Calu3 (cell line): ENCODE measurements at regions of chr7 and their contacts with region 1.

Region 1: DNA sequence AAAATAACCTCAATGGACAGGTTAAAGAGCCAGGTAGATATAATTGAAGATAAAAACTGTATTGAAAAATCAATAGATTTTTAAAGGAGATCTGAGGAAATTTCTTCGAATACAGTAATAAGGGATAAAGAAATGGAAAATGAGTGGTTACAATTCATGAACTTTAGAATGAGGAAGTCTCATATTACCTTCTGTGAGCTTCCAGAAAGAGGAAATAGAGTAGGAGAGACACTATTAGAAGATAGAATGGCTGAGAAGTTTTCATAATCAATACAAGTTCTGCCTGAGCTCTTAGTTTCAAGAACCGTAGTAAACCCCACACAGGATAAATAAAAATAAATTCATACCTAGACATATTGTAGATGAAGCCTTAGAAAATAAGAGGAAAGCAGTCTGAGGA is 11.5 kb downstream of the SDK1 start:
- DNase-seq: no peak
- H3K4me3 Mint-ChIP-seq: no peak overlapping the region
- H3K27ac Mint-ChIP-seq: no peak overlapping the region
- H3K4me1 Mint-ChIP-seq: peaks cover 29% of the 10 kb centered on the region
- H3K27me3 Mint-ChIP-seq: no peaks in the 10 kb centered on the region
- CTCF ChIP-seq: no peak

Region 2: GRCh38 chr7:3427957-3428356 is 115.4 kb after region 1 on chr7:
- CTCF ChIA-PET with region 1: interaction called, 3 read pairs
- intact Hi-C with region 1: loop called (anchors 5 kb)
- DNase-seq: no peak
- H3K4me3 Mint-ChIP-seq: no peak overlapping the region
- H3K27ac Mint-ChIP-seq: no peak overlapping the region
- H3K4me1 Mint-ChIP-seq: peaks cover 19% of the 10 kb centered on the region
- H3K27me3 Mint-ChIP-seq: no peaks in the 10 kb centered on the region
- CTCF ChIP-seq: no peak

Region 3: GRCh38 chr7:3495954-3496353 is 183.4 kb after region 1 on chr7:
- CTCF ChIA-PET with region 1: no interaction called
- intact Hi-C with region 1: no loop called
- DNase-seq: no peak
- H3K4me3 Mint-ChIP-seq: no peak overlapping the region
- H3K27ac Mint-ChIP-seq: no peak overlapping the region
- H3K4me1 Mint-ChIP-seq: peaks cover 14% of the 10 kb centered on the region
- H3K27me3 Mint-ChIP-seq: no peaks in the 10 kb centered on the region
- CTCF ChIP-seq: no peak